ENCODE measurements at regions of chr17 and their contacts with region 1.

Region 1: DNA sequence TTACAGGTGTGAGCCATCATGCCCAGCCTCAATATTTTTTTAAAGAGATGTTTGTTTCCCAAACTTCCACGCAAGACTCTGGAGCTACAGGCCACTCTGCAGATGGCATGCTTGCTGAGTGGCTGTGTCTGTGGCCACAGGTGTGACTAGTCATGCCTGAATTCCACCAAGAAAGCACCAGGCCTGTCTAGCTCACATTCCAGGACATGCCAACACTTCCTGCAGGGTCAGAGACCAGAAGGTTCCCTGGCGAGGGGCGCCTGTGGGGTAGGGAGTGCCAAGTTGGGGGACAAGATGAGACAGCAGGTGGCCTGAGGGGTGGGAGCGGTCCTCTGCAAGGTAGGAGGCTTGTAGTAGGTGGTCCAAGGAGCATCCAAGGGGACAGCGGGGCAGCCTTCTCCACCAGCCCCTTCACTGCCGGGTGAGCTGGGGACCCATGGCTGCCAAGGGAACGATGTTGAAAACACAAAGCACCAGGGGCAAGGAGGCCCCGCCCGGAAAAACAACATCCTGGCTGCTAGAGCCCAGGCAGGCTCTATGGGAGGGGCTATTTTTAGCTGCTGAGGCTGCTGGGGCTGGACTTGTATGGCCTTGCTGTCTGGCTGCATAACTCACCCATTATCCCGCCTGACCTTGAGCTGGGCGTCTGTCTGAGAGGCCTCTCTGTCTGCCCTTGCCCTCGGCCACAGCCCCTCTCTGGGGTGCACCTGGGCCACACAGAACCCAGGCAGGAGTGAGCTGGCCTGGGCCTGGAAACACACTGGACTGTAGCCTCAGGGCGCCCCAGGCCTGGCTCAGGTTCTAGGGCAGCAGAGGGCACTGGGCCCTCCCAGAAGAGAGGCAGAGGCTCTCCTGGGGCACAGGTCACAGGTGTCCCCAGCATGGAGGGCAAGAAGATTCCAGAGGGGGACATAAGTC is 5.7 kb downstream of the TRIM47 start:
- DNase-seq: peak; percentile 87
- ATAC-seq: peak; percentile 65
- H3K4me3 Mint-ChIP-seq: peak overlapping the region; percentile 42
- H3K27ac Mint-ChIP-seq: peak overlapping the region; percentile 95
- H3K4me1 Mint-ChIP-seq: peaks cover 40% of the 10 kb centered on the region
- H3K27me3 Mint-ChIP-seq: peaks cover 3% of the 10 kb centered on the region

Region 2: DNA sequence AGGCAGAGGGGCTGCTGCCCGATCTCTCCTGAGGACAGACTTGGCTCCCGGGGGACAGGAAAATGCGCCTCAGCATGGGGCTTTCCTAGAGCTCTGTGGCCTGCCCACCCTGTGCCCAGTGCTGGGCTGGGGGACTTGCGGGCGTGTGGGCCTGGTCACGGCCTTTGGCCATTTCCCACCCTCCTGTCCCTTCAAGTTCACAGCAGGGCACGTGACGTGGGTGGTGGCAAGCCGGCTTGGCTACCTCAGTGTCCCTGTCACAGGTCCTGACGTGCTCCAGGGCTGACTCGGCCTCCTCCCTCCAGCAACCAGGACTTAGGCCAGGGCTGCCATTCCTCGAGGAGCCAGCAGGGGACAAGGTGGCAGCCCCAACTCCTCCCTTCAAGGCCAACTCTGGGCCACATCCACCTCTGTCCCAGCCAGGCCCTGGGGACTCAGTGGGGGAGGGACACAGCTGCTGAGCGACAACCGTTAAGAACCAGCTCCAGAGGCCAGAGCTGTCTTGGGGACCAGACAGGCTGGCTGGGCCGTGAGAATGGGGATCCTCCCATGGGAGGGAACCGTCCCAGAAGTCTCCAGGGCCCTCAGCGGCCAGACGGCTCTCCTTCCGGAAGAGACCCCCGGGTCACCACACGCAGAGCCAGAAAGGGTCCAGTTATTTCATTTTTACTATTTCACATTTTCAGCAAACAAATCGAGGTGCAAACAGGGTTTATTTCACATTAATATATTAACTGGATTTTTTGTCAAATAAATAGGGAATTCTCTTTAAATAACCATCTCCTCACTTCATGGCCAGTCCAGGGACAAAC is 27.4 kb before region 1 on chr17:
- CTCF ChIA-PET with region 1: interaction called, 9 read pairs
- POLR2A ChIA-PET with region 1: interaction called, 14 read pairs
- DNase-seq: peak; percentile 74
- ATAC-seq: peak; percentile 49
- H3K4me3 Mint-ChIP-seq: peak overlapping the region; percentile 57
- H3K27ac Mint-ChIP-seq: peak overlapping the region; percentile 77
- H3K4me1 Mint-ChIP-seq: peaks cover 36% of the 10 kb centered on the region
- H3K27me3 Mint-ChIP-seq: no peaks in the 10 kb centered on the region

Region 3: DNA sequence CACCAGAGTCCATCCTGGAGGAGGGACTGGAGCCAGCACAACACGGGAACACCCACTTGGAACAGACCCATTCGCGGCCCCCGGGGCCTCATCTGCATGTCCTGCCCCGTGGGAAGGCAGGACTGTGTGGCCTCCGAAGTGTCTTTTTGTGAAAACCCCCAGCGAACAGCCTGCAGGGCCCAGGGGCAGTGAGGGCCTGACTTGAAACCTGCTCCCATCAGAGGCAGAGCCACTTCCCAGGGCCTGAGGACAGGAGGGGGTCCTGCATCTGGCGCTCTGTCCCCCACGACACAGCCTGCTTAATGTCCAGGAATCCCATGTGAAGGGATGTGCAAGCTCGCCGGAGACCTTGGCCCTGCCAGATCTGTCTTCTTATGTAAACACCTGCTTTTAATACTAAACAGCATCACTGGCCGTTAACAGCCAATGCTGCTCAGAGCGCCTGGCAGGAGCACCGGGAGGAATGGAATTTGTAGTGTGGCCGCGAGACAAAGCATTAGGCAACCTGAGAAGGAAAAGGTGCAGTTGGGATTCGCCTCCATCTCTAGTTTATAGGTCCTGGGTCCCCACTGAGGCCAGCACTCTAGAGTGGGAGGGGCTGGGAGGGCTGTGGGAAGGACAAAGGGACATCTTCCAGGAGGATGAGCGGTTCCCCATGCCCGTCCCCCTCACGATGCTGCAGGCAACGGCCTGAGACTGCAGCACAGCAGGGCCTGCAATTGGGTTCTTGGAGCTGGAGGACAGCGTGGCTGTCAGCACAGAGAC is 164.0 kb after region 1 on chr17:
- CTCF ChIA-PET with region 1: no interaction called
- POLR2A ChIA-PET with region 1: no interaction called
- DNase-seq: no peak
- ATAC-seq: no peak
- H3K4me3 Mint-ChIP-seq: no peak overlapping the region
- H3K27ac Mint-ChIP-seq: no peak overlapping the region
- H3K4me1 Mint-ChIP-seq: peaks cover 17% of the 10 kb centered on the region
- H3K27me3 Mint-ChIP-seq: no peaks in the 10 kb centered on the region